Activated CD4-positive, alpha-beta T cell treated with anti-CD3 and anti-CD28 coated beads, Interleukin-2, amount 10 ng/mL, durations not matched to agents 24 days and 14 days (primary cell): ENCODE measurements at regions of chr9 and their contacts with region 1.

Region 1: DNA sequence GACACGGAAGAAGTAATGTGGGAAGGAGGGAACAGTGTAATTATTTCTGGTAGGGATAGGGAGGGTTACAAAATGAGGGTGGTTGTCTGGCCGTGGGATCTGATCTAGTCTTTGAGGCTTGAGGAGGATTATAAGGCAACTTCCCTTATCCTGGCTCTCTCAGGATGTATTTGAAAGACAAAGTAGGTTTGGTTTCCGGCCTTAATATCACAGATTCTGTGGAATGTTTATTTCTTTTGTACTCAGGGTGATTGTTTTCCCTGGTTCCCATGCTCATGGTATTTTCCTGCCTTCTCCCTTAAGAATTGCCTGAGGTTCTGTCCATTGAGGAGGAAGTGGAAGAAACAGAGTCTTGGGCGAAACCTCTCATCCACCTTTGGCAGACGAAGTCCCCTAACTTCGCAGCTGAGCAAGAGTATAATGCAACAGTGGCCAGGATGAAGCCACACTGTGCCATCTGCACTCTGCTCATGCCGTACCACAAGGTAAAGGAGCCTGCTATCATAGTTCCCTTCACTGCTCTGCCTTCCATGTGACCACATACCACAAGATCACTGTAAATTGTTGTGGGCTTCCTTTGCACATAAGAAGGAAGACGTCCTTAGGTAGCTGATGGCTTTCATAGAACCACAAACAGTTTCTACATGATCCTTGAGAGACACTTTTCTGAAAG is 253.8 kb downstream of the KDM4C start:
- DNase-seq: peak; percentile 78
- H3K4me3 Mint-ChIP-seq: no peak overlapping the region
- H3K27ac Mint-ChIP-seq: peak overlapping the region; percentile 60
- H3K4me1 Mint-ChIP-seq: peaks cover 11% of the 10 kb centered on the region
- H3K27me3 Mint-ChIP-seq: no peaks in the 10 kb centered on the region

Region 2: DNA sequence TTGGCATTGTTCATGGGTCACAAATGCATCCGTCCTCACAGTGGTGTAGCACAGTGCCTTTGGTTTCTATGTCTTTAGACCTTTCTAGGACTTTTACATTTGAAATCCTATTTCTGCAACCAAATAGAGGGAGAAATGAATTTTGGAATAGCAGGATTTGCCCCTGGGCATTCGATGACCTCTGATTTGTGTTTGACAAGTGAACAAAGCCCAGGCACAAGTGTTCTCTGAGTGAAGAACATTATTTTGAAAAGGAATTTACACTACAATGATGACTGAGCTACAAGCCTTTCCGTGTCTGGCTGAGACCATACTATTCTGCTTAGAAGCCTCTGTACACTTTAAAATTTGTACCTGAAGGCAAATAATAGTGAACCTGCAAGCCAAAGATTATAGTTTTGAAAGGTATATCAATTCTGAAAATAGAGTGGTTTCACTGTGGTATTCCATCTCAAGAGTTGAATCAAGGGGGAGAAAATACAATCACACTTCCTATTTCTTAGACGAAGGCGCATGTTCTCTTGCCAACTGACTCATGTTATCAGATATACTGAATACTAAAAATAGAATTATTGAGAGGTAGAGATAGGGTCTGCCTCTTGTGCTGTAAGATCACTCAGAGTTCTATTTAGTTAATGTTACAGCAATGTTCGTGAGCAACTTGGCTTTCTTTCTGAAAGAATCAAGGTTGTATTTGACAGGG is 43.8 kb after region 1 on chr9:
- intact Hi-C with region 1: no loop called
- DNase-seq: no peak
- H3K4me3 Mint-ChIP-seq: no peak overlapping the region
- H3K27ac Mint-ChIP-seq: no peak overlapping the region
- H3K4me1 Mint-ChIP-seq: peaks cover 7% of the 10 kb centered on the region
- H3K27me3 Mint-ChIP-seq: no peaks in the 10 kb centered on the region

Region 3: DNA sequence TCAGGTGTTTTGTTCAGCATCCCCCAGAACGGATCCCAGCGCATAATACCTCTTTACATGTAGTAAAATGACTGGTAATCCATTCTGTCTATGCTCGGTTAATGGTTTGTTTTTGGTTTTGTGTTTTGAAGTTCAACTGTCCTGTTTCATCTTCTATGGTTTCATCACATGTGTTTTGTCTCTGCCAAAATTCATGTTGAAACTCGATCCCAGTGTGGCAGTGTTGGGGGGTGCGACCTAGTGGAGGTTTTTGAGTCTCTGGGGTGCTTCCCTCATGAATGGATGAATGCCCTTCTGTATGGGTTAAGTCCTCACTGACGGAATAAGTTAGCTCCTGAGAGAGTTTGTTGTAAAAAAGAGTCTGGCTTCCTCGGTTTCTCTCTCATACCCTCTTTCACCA is 63.6 kb after region 1 on chr9:
- intact Hi-C with region 1: loop called (anchors 10 kb)
- DNase-seq: no peak
- H3K4me3 Mint-ChIP-seq: no peak overlapping the region
- H3K27ac Mint-ChIP-seq: no peak overlapping the region
- H3K4me1 Mint-ChIP-seq: no peaks in the 10 kb centered on the region
- H3K27me3 Mint-ChIP-seq: no peaks in the 10 kb centered on the region

Region 4: DNA sequence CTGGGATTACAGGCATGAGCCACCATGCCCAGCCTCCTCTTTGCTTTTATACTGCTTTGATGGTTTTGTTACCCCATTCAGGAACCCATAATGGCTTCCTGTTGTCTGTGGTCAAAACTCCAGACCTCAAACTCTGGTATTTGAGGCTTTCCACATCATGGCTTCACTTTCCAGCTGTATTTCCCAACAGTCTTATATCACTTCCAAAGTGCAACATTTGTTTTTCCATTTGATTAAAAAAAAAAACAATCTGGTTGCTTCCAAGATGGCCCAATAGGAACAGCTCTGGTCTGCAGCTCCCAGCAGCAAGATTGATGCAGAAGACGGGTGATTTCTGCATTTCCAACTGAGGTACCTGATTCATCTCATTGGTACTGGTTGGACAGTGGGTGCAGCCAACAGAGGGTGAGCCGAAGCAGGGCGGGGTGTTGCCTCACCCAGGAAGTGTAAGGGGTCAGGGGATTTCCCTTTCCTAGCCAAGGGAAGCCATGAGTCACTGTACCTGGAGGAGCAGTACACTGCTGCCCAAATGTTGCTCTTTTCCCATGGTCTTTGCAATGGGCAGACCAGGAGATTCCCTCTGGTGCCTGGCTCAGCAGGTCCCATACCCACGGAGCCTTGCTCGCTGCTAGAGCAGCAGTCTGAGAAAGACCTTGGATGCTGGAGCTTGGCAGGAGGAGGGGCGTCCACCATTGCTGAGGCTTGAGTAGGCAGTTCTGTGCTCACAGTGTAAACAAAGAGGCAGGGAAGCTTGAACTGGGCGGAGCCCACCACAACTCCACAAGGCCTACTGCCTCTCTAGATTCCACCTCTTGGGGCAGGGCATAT is 204.7 kb after region 1 on chr9:
- intact Hi-C with region 1: no loop called
- DNase-seq: peak; percentile 85
- H3K4me3 Mint-ChIP-seq: peak overlapping the region; percentile 45
- H3K27ac Mint-ChIP-seq: peak overlapping the region; percentile 62
- H3K4me1 Mint-ChIP-seq: peaks cover 18% of the 10 kb centered on the region
- H3K27me3 Mint-ChIP-seq: peaks cover 32% of the 10 kb centered on the region